GM12878 (cell line): ENCODE measurements at regions of chr16 and their contacts with region 1.

Region 1: GRCh38 chr16:21083729-21084268 is 66.8 kb downstream of the DNAH3 start:
- DNase-seq: no peak
- ATAC-seq: peak; percentile 92
- H3K4me3 ChIP-seq: no peak overlapping the region
- H3K27ac ChIP-seq: no peak overlapping the region
- H3K4me1 ChIP-seq: no peaks in the 10 kb centered on the region
- H3K27me3 ChIP-seq: no peaks in the 10 kb centered on the region
- CTCF ChIP-seq: peak; percentile 67 to 76 (median 71)
- EP300 ChIP-seq: no peak
- POLR2A ChIP-seq: no peak
- RAD21 ChIP-seq: peak; percentile 87

Region 2: DNA sequence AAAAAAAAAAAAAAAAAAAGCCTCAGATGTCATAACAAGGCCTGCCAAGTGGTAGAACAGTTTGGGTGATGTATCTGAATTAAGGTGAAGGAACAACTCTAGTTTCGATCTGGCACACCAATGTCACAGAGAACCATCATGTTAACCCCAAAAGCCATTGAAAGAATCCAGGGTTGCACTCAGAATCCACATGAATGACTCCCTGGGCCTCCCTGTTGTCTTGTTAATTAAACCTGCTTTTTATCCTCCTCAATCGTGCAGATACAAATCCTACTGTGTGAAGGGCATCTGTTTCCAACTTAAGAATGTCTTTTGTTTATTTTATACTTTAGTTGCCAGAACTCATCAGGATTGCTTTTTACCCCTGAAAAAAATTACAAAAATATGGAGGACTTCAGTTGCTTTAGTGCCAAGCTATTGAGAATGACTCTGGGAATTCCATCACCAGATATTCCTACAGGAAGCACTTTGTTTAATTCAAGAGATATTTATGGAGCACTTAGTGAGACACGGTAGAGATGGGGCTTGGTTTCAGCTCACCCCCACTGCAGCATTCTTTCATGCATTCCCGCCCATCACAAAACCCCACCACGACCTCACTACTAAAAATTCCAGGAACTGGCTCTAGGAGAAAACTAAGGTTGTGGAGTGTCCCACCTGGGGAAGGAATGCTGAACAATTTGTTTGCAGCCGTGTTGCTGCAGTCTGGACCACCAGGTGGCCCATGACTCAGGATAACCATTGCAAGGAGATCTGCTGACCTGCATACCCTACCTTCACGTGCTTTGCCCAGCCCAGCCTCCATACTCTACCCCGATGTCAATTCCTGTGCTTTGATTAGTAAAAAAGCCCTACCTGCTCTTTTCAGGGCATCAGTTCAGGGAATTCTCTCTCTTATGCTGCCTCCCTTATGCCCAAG is 1135.4 kb before region 1 on chr16:
- CTCF ChIA-PET with region 1: no interaction called
- POLR2A ChIA-PET with region 1: no interaction called
- RAD21 ChIA-PET with region 1: no interaction called
- SMC1A ChIA-PET with region 1: no interaction called
- in situ Hi-C with region 1: no loop called
- intact Hi-C with region 1: no loop called
- DNase-seq: no peak
- ATAC-seq: no peak
- H3K4me3 ChIP-seq: no peak overlapping the region
- H3K27ac ChIP-seq: no peak overlapping the region
- H3K4me1 ChIP-seq: no peaks in the 10 kb centered on the region
- H3K27me3 ChIP-seq: no peaks in the 10 kb centered on the region
- CTCF ChIP-seq: no peak
- EP300 ChIP-seq: no peak
- POLR2A ChIP-seq: no peak
- RAD21 ChIP-seq: no peak

Region 3: DNA sequence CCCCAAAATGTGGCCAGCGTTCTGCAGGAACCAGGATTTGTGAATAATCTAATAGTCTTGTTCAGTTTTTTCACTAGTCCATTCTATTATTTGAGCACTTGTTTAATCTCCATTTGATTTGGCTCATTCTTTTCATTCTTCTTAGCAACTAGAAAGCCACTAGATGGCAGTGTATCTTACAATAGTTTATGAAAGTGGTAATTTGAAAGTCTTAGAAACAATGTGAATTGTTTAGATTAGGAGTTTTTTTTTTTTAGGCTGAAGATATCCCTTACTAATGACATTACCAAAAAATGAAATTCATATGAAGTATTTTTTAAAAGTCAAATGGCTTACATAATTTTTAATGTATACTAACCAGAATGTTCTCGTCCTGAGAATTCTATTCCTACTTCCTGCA is 284.2 kb before region 1 on chr16:
- CTCF ChIA-PET with region 1: interaction called, 10 read pairs
- POLR2A ChIA-PET with region 1: no interaction called
- RAD21 ChIA-PET with region 1: no interaction called
- SMC1A ChIA-PET with region 1: no interaction called
- in situ Hi-C with region 1: no loop called
- intact Hi-C with region 1: loop called (anchors 1 kb)
- DNase-seq: no peak
- ATAC-seq: peak; percentile 42; the same call in 1 of the 3 replicates
- H3K4me3 ChIP-seq: no peak overlapping the region
- H3K27ac ChIP-seq: no peak overlapping the region
- H3K4me1 ChIP-seq: no peaks in the 10 kb centered on the region
- H3K27me3 ChIP-seq: no peaks in the 10 kb centered on the region
- CTCF ChIP-seq: peak in 2 of 3 experiments; percentile 24 to 49; a peak in 2 of 6 replicates
- EP300 ChIP-seq: no peak
- POLR2A ChIP-seq: no peak
- RAD21 ChIP-seq: peak; percentile 46